Ovary (tissue), 10 donors: ENCODE measurements at regions of chr9 and their contacts with region 1.

Region 1: DNA sequence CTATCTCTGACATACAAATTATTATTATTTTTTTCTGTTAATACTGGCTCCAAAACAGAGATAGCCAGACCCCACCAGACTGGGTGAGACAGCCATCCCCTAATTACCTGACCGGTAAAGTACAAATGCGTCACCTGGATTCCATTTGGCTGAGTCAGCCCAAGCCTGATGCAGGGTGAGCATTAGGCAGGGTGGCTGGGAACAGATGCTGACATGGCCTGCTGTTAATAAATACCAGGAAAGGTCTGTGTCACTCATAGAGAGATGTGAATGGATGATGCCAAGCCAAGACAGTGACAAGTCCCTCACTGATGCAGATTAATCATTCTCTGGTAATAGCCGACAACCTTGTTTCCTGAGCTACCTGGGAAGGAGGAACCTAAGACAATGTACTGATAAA is 183.5 kb downstream of the TRIM32 start:
- DNase-seq: no peak
- H3K4me3 ChIP-seq: no peak overlapping the region
- H3K27ac ChIP-seq: no peak overlapping the region
- H3K4me1 ChIP-seq: no peaks in the 10 kb centered on the region
- H3K27me3 ChIP-seq: no peaks in the 10 kb centered on the region
- CTCF ChIP-seq: no peak
- EP300 ChIP-seq: no peak
- POLR2A ChIP-seq: no peak

Region 2: DNA sequence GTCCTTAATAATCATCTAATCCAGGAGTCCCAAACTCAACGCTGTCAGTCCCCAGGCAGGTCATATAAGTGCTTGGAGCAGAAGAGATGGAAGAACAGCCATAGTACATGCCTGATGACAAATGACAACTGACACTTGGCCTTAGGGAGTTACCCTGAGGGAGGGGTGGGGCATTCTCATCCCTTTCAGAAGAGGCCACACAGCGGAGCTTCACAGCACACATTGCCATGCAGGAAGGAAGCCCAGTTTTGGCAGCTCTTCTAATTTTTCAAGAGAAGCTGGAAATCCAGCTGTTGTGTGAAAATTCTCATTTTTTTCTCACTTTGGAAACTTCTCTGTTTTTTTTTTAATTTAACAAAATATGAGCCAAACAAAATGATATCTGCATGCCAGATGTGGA is 455.3 kb after region 1 on chr9:
- intact Hi-C with region 1: loop called in 1 of 4 experiments (anchors 10 kb)
- DNase-seq: no peak
- H3K4me3 ChIP-seq: no peak overlapping the region
- H3K27ac ChIP-seq: no peak overlapping the region
- H3K4me1 ChIP-seq: no peaks in the 10 kb centered on the region
- H3K27me3 ChIP-seq: no peaks in the 10 kb centered on the region
- CTCF ChIP-seq: no peak
- EP300 ChIP-seq: no peak
- POLR2A ChIP-seq: no peak